Ascending aorta (tissue), 2 donors: ENCODE measurements at regions of chr1 and their contacts with region 1.

Region 1: DNA sequence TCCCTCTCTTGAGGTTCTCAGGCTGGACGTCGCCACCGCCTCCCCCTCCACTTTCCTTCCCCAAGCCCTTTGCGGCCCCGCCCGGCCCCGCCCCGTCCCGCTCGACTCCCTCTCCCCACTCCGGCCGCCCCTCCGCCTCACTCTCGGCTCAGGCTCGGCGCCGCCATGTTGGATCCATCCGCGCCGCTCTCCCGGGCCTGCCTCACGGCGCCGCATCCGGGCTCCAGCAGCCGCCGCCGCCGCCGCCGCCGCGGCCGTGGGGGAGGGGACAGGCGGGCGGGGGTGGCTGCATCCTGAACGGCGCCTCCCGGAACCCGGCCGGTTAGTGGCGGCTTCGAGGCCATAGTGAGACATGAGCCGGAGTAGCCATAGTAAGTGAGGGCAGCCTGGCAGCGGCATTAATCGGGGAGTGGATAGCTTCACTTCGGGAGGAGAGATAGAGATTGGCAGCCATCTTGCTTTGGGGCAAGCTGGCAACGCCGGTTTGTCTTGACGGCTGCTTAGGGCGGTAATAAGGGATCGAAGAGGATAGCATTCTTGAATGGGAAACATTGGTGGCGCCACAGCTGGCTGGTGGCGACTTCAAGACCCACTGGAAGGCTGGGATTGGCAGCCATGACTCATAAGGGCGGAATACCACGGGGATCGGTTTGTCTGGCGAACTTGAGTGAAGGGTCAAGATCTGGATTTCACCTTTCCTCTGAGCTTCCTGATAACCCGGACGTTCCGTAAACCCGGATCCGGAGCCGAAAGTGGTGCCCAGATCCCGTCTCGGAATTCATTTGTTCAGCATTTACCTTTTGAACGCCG is at the start of gene DEDD:
- DNase-seq: peak; percentile 89 to 98
- H3K4me3 ChIP-seq: peak within 1 kb of the TSS; percentile 71 to 89
- H3K27ac ChIP-seq: peak within 1 kb of the TSS; percentile 96 to 98
- H3K4me1 ChIP-seq: peaks cover 5 to 22% of the 10 kb centered on the region in 2 donors
- H3K27me3 ChIP-seq: no peaks in the 10 kb centered on the region
- CTCF ChIP-seq: no peak
- total RNA-seq, gene DEDD: 27.8 TPM

Region 2: GRCh38 chr1:161098210-161099068 is 34.2 kb before region 1 on chr1 and contains the start of gene KLHDC9:
- intact Hi-C with region 1: loop called (anchors 2 kb)
- DNase-seq: peak in 1 of 2 donors; percentile 82
- H3K4me3 ChIP-seq: peak within 1 kb of the TSS; percentile 71
- H3K27ac ChIP-seq: peak within 1 kb of the TSS; percentile 41 to 73
- H3K4me1 ChIP-seq: peaks cover 0 to 15% of the 10 kb centered on the region in 2 donors
- H3K27me3 ChIP-seq: no peaks in the 10 kb centered on the region
- CTCF ChIP-seq: peak in 1 of 3 experiments; percentile 27
- total RNA-seq, gene KLHDC9: 0.32 TPM

Region 3: DNA sequence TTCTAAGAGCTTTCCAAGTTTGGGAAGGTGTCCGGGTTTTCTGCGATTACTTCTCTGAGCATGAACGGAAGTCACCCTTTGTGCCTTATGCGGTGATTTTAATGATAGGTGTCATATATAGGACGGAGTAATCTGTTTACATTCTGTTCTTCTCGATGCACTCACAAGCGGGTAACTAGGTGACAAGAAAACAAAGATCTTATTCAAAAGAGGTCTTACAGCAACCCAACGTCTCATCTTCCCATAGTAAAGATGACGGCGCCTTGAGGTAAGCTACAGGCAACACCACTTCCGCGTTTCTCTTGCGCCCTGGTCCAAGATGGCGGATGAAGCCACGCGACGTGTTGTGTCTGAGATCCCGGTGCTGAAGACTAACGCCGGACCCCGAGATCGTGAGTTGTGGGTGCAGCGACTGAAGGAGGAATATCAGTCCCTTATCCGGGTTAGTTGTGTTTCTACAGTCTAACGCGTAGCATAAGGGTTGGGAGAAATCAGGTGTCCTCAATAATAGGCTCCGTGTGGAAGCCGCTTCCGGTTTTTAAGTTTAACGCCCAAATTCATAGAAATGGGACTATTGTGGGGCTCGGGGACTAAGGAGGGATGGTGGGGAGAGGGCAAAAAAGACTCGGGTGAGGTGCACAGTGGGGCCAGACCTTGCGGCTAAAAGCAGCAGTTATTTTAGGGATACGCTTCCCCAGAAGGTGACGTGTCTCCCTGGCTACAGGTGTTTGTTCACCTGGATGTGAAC is 21.2 kb after region 1 on chr1 and contains the start of gene UFC1:
- intact Hi-C with region 1: loop called (anchors 1 kb)
- DNase-seq: peak in 1 of 2 donors; percentile 91
- H3K4me3 ChIP-seq: peak within 1 kb of the TSS; percentile 76 to 83
- H3K27ac ChIP-seq: peak within 1 kb of the TSS; percentile 91 to 93
- H3K4me1 ChIP-seq: peaks cover 0 to 13% of the 10 kb centered on the region in 2 donors
- H3K27me3 ChIP-seq: no peaks in the 10 kb centered on the region
- CTCF ChIP-seq: no peak
- total RNA-seq, gene UFC1: 3.3 TPM

Region 4: DNA sequence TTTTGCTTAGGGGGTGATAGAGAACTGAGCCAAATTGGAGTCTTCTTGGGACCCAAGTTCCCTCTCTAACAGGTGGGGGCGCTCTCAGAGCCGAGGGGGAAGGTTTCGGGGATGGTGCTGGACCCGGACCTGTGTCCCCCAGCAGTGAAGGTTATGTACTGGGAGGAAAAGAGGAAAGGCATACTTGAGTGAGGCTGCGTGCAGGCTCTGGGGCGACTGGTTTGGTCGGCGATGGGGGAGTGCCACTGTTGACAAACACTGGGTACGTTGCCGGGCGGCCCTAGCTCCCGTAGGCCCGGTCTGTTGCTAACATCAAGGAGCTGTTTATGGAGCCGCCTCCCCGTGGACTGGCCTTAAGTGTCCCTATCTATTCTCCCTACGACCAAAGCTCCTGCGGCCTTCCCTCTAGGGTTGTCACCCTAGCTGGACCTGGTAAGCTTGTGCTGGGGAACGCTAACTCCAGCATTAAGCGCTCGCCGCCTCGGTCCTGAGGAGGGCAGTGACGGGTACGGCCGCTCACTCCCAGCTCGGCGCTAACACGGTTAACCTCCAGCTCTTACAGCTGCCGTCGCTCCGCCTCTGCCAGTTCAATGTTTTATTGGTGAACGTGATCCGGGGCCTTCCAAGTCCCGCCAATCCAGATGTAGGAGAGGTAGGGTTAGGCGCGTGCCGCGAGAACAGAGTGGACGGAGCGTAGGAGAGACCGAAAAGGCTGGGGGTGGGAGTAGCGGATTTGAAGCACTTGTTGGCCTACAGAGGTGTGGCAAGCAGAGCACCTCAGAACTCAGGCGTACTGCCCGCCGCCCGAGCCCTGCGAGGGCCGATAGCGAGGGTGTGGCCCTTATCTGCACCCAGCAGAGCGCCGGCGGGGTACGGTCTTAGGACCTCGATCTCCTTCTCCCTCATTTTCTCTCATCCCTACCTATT is 33.4 kb after region 1 on chr1 and contains the start of gene PPOX:
- intact Hi-C with region 1: loop called (anchors 1 kb)
- DNase-seq: peak; percentile 94 to 98
- H3K4me3 ChIP-seq: peak within 1 kb of the TSS; percentile 62 to 86
- H3K27ac ChIP-seq: peak within 1 kb of the TSS; percentile 69 to 90
- H3K4me1 ChIP-seq: peaks cover 6 to 12% of the 10 kb centered on the region in 2 donors
- H3K27me3 ChIP-seq: no peaks in the 10 kb centered on the region
- CTCF ChIP-seq: peak; percentile 11 to 48 (median 33)
- total RNA-seq, gene PPOX: 4.8 TPM

Region 5: GRCh38 chr1:161185282-161185682 is 52.7 kb after region 1 on chr1:
- intact Hi-C with region 1: no loop called
- DNase-seq: peak; percentile 51 to 86
- H3K4me3 ChIP-seq: no peak overlapping the region
- H3K27ac ChIP-seq: peak overlapping the region; percentile 27 to 63
- H3K4me1 ChIP-seq: no peaks in the 10 kb centered on the region
- H3K27me3 ChIP-seq: no peaks in the 10 kb centered on the region
- CTCF ChIP-seq: no peak

Region 6: GRCh38 chr1:161389691-161390558 is 257.3 kb after region 1 on chr1:
- intact Hi-C with region 1: loop called (anchors 5 kb)
- DNase-seq: peak; percentile 95 to 99
- H3K4me3 ChIP-seq: peak overlapping the region; percentile 53 to 74
- H3K27ac ChIP-seq: peak overlapping the region; percentile 89 to 93
- H3K4me1 ChIP-seq: peaks cover 0 to 4% of the 10 kb centered on the region in 2 donors
- H3K27me3 ChIP-seq: no peaks in the 10 kb centered on the region
- CTCF ChIP-seq: no peak